WTC11 (cell line): ENCODE measurements at regions of chr1 and their contacts with region 1.

Region 1: DNA sequence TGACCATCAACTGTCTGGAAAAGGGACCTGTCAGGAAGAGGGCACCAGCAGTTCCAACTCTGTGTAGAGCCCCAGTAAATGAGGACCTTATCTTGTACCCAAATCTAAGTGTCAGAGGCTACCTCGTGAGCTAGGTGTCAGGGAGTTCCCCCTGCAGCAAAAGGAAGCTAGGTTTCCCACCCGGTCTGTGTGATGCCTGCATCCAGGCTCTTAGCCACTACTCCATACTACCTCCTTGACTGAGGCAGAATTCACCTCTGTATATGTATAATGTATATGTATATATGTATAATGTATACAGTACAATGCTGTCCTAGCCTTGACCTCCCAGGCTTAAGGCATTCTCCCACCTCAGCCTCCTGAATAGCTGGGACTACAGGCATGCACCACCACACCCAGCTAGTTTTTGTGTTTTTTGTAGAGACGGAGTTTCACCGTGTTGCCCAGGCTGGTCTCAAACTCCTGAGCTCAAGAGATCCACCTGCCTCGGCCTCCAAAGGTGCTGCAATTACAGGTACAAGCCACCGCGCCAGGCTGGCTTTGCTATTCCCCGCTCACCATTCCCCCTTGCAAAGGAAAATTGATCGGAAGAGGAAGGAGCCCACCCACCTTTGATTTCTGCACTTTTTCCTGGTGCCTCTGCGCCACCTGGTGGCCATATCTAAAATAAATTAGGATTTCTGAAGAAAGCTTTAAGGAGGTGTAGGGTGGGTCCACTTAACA is 15.7 kb upstream of the LUZP1 start:
- DNase-seq: peak; percentile 72
- ATAC-seq: peak; percentile 96
- H3K4me3 Mint-ChIP-seq: no peak overlapping the region
- H3K27ac Mint-ChIP-seq: no peak overlapping the region
- H3K4me1 Mint-ChIP-seq: no peaks in the 10 kb centered on the region
- H3K27me3 Mint-ChIP-seq: peaks cover 10% of the 10 kb centered on the region
- CTCF ChIP-seq: peak; percentile 86

Region 2: DNA sequence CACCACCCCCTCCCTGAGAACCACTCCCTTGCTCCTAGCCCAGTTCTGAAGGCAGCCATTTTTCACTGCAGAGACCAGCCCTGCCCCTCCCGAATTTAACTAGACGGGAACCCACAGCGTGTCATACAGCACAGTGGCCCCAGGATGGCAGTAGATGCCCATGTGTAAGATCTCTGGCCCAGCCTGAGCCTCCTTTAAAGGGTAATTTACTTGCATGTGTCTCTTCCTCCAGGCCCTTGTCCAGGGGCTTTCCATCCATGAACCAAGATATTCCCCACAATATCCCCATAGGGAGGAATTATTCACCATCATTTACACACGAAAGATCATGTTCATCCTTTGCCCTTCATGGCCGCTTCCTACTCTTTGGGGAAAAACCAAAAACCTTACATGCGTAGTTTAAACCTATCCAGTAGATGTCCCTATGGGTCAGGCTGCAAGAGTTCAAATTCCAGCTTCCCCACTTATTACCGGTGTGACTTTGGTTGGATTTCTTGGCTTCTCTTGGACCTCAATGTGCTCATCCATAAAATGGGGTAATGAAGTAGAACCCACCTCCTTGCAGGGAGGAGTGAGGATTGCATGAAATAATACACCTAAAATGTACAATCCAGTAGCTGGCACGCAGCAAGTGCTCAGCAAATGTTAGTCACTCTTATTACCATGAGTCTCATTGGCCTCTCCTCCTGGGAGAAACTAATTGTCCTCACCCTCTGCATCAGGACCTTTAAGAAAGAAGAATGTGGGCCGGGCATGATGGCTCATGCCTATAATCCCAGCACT is 207.7 kb before region 1 on chr1:
- CTCF ChIA-PET with region 1: interaction called, 22 read pairs
- POLR2A ChIA-PET with region 1: interaction called, 4 read pairs
- DNase-seq: peak; percentile 79
- ATAC-seq: peak; percentile 98
- H3K4me3 Mint-ChIP-seq: peak overlapping the region; percentile 30; the same call in 1 of the 2 replicates
- H3K27ac Mint-ChIP-seq: no peak overlapping the region
- H3K4me1 Mint-ChIP-seq: peaks cover 12% of the 10 kb centered on the region
- H3K27me3 Mint-ChIP-seq: no peaks in the 10 kb centered on the region; the same call in 1 of the 2 replicates
- CTCF ChIP-seq: peak; percentile 41; the same call in 1 of the 2 replicates

Region 3: DNA sequence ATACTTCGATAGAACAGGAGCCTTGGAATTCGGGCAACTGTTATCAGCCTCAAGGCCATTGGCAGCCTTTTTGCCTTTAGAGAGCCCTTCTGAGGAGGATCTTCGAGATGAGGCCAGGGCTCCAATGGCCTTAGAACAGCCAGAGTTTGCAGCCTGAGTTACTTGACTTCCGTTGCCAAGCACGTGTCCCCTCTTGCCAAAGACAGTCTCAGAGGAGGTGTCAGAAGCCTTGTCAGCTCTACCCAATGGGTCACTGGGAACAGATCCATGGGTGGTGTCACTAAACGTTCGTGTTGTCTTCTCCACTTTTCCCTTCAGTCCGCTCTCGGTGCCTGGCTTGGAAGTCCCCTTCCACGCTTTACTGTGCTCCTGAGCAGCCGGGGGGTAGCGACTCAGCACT is 91.9 kb before region 1 on chr1:
- CTCF ChIA-PET with region 1: interaction called, 156 read pairs
- POLR2A ChIA-PET with region 1: no interaction called
- DNase-seq: no peak
- ATAC-seq: no peak
- H3K4me3 Mint-ChIP-seq: no peak overlapping the region
- H3K27ac Mint-ChIP-seq: no peak overlapping the region
- H3K4me1 Mint-ChIP-seq: no peaks in the 10 kb centered on the region
- H3K27me3 Mint-ChIP-seq: no peaks in the 10 kb centered on the region
- CTCF ChIP-seq: no peak

Region 4: DNA sequence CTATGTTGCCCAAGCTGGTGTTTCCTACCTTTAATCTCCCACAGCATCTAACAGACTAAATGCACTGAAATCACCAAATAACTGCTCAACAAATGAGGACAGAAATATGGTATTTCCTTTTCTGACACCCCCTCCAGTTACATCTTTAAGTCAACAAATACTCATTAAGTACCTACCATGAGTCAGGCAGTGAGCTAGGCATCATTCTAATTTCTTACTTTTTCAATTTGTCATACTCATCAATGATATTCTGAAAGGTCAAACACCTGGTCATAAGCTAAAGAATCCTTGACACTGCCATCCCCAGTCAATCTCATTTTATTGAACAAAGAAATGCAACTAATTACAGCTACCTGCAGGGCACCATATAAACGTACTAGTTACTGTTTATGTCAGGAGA is 52.3 kb before region 1 on chr1:
- CTCF ChIA-PET with region 1: interaction called, 13 read pairs
- POLR2A ChIA-PET with region 1: no interaction called
- DNase-seq: no peak
- ATAC-seq: no peak
- H3K4me3 Mint-ChIP-seq: no peak overlapping the region
- H3K27ac Mint-ChIP-seq: peak overlapping the region; percentile 15; the same call in 1 of the 2 replicates
- H3K4me1 Mint-ChIP-seq: peaks cover 12% of the 10 kb centered on the region
- H3K27me3 Mint-ChIP-seq: no peaks in the 10 kb centered on the region
- CTCF ChIP-seq: no peak

Region 5: GRCh38 chr1:23196639-23197328 is 12.4 kb after region 1 on chr1:
- CTCF ChIA-PET with region 1: interaction called, 11 read pairs
- POLR2A ChIA-PET with region 1: no interaction called
- DNase-seq: no peak
- ATAC-seq: no peak
- H3K4me3 Mint-ChIP-seq: no peak overlapping the region
- H3K27ac Mint-ChIP-seq: peak overlapping the region; percentile 11; the same call in 1 of the 2 replicates
- H3K4me1 Mint-ChIP-seq: peaks cover 4% of the 10 kb centered on the region; the same call in 1 of the 2 replicates
- H3K27me3 Mint-ChIP-seq: no peaks in the 10 kb centered on the region
- CTCF ChIP-seq: no peak

Region 6: GRCh38 chr1:23263380-23263887 is 79.1 kb after region 1 on chr1:
- CTCF ChIA-PET with region 1: interaction called, 26 read pairs
- POLR2A ChIA-PET with region 1: no interaction called
- DNase-seq: no peak
- ATAC-seq: peak; percentile 87
- H3K4me3 Mint-ChIP-seq: peak overlapping the region; percentile 42; the same call in 1 of the 2 replicates
- H3K27ac Mint-ChIP-seq: peak overlapping the region; percentile 69
- H3K4me1 Mint-ChIP-seq: peaks cover 44% of the 10 kb centered on the region
- H3K27me3 Mint-ChIP-seq: no peaks in the 10 kb centered on the region; the same call in 1 of the 2 replicates
- CTCF ChIP-seq: no peak